ENCODE measurements at regions of chr19 and their contacts with region 1.

Region 1: GRCh38 chr19:9785367-9786331 is 17.1 kb upstream of the ZNF846 start:
- DNase-seq: peak; percentile 92 to 99 (median 98)
- ATAC-seq: peak; percentile 84
- H3K4me3 ChIP-seq: peak overlapping the region; percentile 69
- H3K4me3 Mint-ChIP-seq: peak overlapping the region; percentile 94
- H3K27ac ChIP-seq: peak overlapping the region; percentile 87 to 92
- H3K27ac Mint-ChIP-seq: peak overlapping the region; percentile 91
- H3K4me1 ChIP-seq: peaks cover 19% of the 10 kb centered on the region
- H3K4me1 Mint-ChIP-seq: peaks cover 31% of the 10 kb centered on the region
- H3K27me3 ChIP-seq: no peaks in the 10 kb centered on the region
- H3K27me3 Mint-ChIP-seq: no peaks in the 10 kb centered on the region
- CTCF ChIP-seq: no peak

Region 2: GRCh38 chr19:9818734-9819589 is 33.3 kb after region 1 on chr19 and contains the start of gene FBXL12:
- CTCF ChIA-PET with region 1: no interaction called
- POLR2A ChIA-PET with region 1: no interaction called
- intact Hi-C with region 1: loop called in 1 of 2 experiments (anchors 1 kb)
- DNase-seq: peak; percentile 100
- ATAC-seq: peak; percentile 90
- H3K4me3 ChIP-seq: peak within 1 kb of the TSS; percentile 95
- H3K4me3 Mint-ChIP-seq: peak within 1 kb of the TSS; percentile 95
- H3K27ac ChIP-seq: peak within 1 kb of the TSS; percentile 97 to 100
- H3K27ac Mint-ChIP-seq: peak within 1 kb of the TSS; percentile 92
- H3K4me1 ChIP-seq: peaks cover 25% of the 10 kb centered on the region
- H3K4me1 Mint-ChIP-seq: peaks cover 37% of the 10 kb centered on the region
- H3K27me3 ChIP-seq: no peaks in the 10 kb centered on the region
- H3K27me3 Mint-ChIP-seq: no peaks in the 10 kb centered on the region
- CTCF ChIP-seq: no peak
- total RNA-seq, gene FBXL12: 33.4 to 38.4 TPM

Region 3: DNA sequence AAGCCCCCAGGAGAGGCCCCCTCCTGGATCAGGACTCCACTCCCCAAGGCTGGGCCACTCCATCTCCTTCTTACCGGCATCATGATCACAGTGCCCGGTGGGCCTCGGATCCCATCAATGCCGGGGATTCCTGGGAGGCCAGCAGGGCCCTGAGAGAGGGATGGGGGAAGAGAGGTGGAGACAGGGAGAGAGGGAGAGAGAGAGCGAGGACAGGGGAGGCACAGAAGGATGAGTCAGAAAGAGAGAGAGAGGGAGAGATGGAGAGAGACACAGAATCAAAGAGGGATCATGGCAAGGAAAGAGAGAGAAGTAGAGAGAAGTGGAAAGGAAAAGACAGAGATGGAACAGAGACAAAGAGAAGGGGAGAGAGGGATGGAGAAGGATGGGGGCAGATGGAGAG is 210.9 kb after region 1 on chr19:
- CTCF ChIA-PET with region 1: no interaction called
- POLR2A ChIA-PET with region 1: no interaction called
- intact Hi-C with region 1: no loop called
- DNase-seq: no peak
- ATAC-seq: no peak
- H3K4me3 ChIP-seq: no peak overlapping the region
- H3K4me3 Mint-ChIP-seq: no peak overlapping the region
- H3K27ac ChIP-seq: no peak overlapping the region
- H3K27ac Mint-ChIP-seq: no peak overlapping the region
- H3K4me1 ChIP-seq: peaks cover 9% of the 10 kb centered on the region
- H3K4me1 Mint-ChIP-seq: no peaks in the 10 kb centered on the region
- H3K27me3 ChIP-seq: peaks cover 3 to 5% of the 10 kb centered on the region in 2 experiments
- H3K27me3 Mint-ChIP-seq: peaks cover 14% of the 10 kb centered on the region
- CTCF ChIP-seq: no peak

Measured in CD4-positive, alpha-beta T cell (primary cell).